Psoas muscle (tissue), 8 donors: ENCODE measurements at regions of chr13 and their contacts with region 1.

Region 1: DNA sequence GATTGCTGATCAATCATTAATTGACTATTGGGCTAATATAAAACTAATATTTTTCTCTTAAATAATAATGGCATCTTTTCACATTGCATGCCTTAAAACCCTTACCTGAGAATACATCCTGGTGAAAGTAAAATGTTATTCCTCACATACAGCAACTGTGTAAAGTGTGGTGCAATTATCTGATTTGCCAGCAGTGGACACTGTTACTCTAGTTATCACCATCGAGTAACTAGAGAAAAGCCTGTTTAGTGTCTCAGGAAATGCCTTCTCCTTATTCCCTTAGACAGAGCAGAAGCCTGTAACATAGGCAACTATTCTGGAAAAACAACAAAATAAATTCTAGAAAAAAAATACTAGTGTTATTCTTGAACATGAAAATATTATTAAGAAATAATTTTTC is 459.8 kb downstream of the FGF14 start:
- DNase-seq: no peak
- ATAC-seq: peak; percentile 60 to 96 (median 84)
- H3K4me3 ChIP-seq: no peak overlapping the region
- H3K27ac ChIP-seq: no peak overlapping the region
- H3K4me1 ChIP-seq: no peaks in the 10 kb centered on the region
- H3K27me3 ChIP-seq: no peaks in the 10 kb centered on the region
- CTCF ChIP-seq: peak; percentile 69

Region 2: DNA sequence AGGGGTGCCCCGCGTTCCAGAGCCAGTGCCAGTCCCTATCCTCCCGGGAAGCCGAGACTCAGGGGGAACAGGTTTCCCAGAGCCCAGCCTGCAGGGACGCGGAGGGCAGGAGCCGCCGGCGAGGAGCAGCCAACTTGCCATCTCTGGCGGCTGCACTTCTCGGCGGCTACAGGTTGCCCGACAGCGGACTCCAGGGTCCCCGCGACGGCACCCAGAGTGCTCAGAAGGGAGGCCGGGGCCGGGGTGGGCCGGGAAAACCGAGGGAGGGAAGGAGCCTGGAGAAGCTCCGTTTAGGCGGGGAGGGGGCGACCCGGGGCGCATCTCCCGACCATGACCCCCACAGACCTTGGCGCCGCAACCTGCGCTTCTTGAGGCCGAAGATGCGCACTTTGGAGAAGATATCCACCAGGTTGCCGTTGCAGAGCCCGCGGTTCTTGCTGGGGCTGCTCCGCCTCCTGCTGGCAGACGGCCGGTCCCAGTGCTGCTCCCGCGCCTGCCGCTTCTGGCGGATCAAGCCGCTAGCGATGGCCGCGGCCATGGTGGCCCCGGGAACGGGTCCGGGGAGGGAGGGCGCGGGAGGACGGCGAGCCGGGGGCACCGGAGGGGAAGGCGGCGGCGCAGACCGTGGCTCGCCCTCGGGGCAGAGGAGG is 25.8 kb before region 1 on chr13:
- intact Hi-C with region 1: no loop called
- DNase-seq: peak in 1 of 2 donors; percentile 17
- ATAC-seq: no peak
- H3K4me3 ChIP-seq: peak overlapping the region; percentile 38
- H3K27ac ChIP-seq: no peak overlapping the region
- H3K4me1 ChIP-seq: no peaks in the 10 kb centered on the region
- H3K27me3 ChIP-seq: peaks cover 0 to 71% (median 10%) of the 10 kb centered on the region in 3 donors
- CTCF ChIP-seq: no peak

Region 3: GRCh38 chr13:102020611-102021216 is 78.7 kb after region 1 on chr13:
- intact Hi-C with region 1: no loop called
- DNase-seq: no peak
- ATAC-seq: no peak
- H3K4me3 ChIP-seq: no peak overlapping the region
- H3K27ac ChIP-seq: no peak overlapping the region
- H3K4me1 ChIP-seq: no peaks in the 10 kb centered on the region
- H3K27me3 ChIP-seq: no peaks in the 10 kb centered on the region
- CTCF ChIP-seq: no peak

Region 4: DNA sequence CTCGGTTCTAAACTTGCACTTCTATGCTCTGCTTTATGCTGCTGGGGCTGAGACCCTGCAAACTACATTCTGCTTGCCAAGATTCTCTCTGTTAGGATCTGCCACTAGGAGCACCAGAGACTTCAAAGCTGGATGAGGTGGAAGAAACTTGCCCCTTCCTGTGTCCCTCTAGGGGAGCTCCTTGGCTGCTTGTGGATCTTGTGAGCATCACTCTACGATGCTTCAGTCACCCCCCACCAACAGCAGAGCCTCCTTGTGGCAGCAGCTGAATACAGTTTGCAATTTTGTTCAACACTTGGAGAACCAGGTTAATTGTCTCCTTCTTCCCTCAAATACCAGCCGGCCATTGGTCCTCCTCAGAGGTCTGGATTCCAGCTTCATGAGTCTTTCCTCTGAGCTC is 149.2 kb after region 1 on chr13:
- intact Hi-C with region 1: loop called (anchors 10 kb)
- DNase-seq: no peak
- ATAC-seq: peak in 2 of 4 donors; percentile 54 to 72
- H3K4me3 ChIP-seq: no peak overlapping the region
- H3K27ac ChIP-seq: peak overlapping the region; percentile 53
- H3K4me1 ChIP-seq: no peaks in the 10 kb centered on the region
- H3K27me3 ChIP-seq: no peaks in the 10 kb centered on the region
- CTCF ChIP-seq: no peak

Region 5: GRCh38 chr13:102460801-102461200 is 518.8 kb after region 1 on chr13:
- intact Hi-C with region 1: loop called (anchors 5 kb)
- DNase-seq: no peak
- ATAC-seq: no peak
- H3K4me3 ChIP-seq: no peak overlapping the region
- H3K27ac ChIP-seq: no peak overlapping the region
- H3K4me1 ChIP-seq: no peaks in the 10 kb centered on the region
- H3K27me3 ChIP-seq: no peaks in the 10 kb centered on the region
- CTCF ChIP-seq: no peak

Region 6: DNA sequence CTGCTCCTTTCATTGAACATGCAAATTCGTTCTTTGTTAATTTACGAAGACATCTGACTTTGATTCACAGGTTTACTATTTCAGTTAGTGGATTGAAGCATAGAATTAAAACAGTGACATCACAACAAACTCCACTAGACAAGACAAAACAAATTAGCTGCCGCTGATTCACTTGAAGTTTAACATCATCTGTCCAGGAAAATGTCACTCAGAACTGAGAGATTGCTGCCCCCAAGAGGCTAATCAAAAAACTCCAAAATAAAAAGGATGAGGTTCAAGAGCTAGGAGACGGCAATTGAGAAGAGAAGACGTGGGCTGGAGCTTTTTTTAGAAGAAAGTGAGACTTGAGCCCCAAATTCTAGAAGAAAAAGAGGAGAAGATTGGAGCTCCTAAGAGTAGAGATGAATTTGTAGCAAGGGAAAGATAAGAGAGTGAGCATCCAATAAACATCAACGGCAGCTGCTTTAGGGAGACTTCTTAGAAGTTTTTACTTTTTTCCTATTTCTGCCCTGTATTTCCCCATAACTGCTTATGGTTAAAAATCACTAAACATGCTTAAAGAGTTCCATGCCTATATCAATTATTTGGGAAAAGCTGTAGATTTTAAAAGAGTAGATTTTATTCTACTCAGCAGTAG is 614.0 kb after region 1 on chr13:
- intact Hi-C with region 1: loop called (anchors 5 to 10 kb)
- DNase-seq: no peak
- ATAC-seq: peak in 2 of 4 donors; percentile 43 to 67
- H3K4me3 ChIP-seq: no peak overlapping the region
- H3K27ac ChIP-seq: no peak overlapping the region
- H3K4me1 ChIP-seq: peaks cover 4% of the 10 kb centered on the region
- H3K27me3 ChIP-seq: no peaks in the 10 kb centered on the region
- CTCF ChIP-seq: peak; percentile 43